Activated naive CD4-positive, alpha-beta T cell treated with anti-CD3 and anti-CD28 coated beads for 36 hours (primary cell): ENCODE measurements at regions of chr1 and their contacts with region 1.

Region 1: GRCh38 chr1:92536980-92537884 is 50.5 kb upstream of the GFI1 start:
- DNase-seq: peak; percentile 30
- H3K4me3 Mint-ChIP-seq: peak overlapping the region; percentile 57
- H3K27ac Mint-ChIP-seq: peak overlapping the region; percentile 88
- H3K4me1 Mint-ChIP-seq: peaks cover 83% of the 10 kb centered on the region
- H3K27me3 Mint-ChIP-seq: no peaks in the 10 kb centered on the region

Region 2: GRCh38 chr1:91754348-91754747 is 782.9 kb before region 1 on chr1:
- CTCF ChIA-PET with region 1: no interaction called
- intact Hi-C with region 1: loop called (anchors 1 kb)
- DNase-seq: peak; percentile 81
- H3K4me3 Mint-ChIP-seq: no peak overlapping the region
- H3K27ac Mint-ChIP-seq: peak overlapping the region; percentile 70
- H3K4me1 Mint-ChIP-seq: peaks cover 37% of the 10 kb centered on the region
- H3K27me3 Mint-ChIP-seq: peaks cover 4% of the 10 kb centered on the region

Region 3: GRCh38 chr1:92037400-92037799 is 499.8 kb before region 1 on chr1:
- CTCF ChIA-PET with region 1: no interaction called
- intact Hi-C with region 1: no loop called
- DNase-seq: no peak
- H3K4me3 Mint-ChIP-seq: no peak overlapping the region
- H3K27ac Mint-ChIP-seq: no peak overlapping the region
- H3K4me1 Mint-ChIP-seq: no peaks in the 10 kb centered on the region
- H3K27me3 Mint-ChIP-seq: no peaks in the 10 kb centered on the region

Region 4: DNA sequence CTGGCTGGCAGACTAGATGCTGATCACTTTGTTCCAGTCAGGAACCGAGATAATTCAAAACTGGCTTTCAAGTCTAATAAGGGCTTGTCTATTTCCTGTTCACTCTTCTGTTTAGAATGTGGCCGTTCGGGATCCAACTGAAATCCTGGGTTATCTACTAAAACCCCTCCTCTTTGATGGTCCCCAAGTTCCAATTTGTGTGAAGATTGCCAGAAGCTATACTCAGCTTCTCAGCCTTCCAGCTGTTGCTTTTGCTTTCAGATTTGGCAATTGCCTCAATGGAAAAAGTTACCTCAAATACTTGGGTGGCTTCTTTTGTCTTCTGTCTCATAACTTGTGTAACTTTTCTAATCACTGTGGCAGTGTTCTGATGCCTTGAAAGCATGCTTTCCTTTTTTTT is 413.4 kb before region 1 on chr1:
- CTCF ChIA-PET with region 1: no interaction called
- intact Hi-C with region 1: loop called (anchors 1 kb)
- DNase-seq: peak; percentile 29
- H3K4me3 Mint-ChIP-seq: peak overlapping the region; percentile 42
- H3K27ac Mint-ChIP-seq: peak overlapping the region; percentile 62
- H3K4me1 Mint-ChIP-seq: peaks cover 13% of the 10 kb centered on the region
- H3K27me3 Mint-ChIP-seq: no peaks in the 10 kb centered on the region

Region 5: GRCh38 chr1:92367496-92367895 is 169.7 kb before region 1 on chr1:
- CTCF ChIA-PET with region 1: no interaction called
- intact Hi-C with region 1: no loop called
- DNase-seq: no peak
- H3K4me3 Mint-ChIP-seq: no peak overlapping the region
- H3K27ac Mint-ChIP-seq: no peak overlapping the region
- H3K4me1 Mint-ChIP-seq: peaks cover 39% of the 10 kb centered on the region
- H3K27me3 Mint-ChIP-seq: no peaks in the 10 kb centered on the region

Region 6: DNA sequence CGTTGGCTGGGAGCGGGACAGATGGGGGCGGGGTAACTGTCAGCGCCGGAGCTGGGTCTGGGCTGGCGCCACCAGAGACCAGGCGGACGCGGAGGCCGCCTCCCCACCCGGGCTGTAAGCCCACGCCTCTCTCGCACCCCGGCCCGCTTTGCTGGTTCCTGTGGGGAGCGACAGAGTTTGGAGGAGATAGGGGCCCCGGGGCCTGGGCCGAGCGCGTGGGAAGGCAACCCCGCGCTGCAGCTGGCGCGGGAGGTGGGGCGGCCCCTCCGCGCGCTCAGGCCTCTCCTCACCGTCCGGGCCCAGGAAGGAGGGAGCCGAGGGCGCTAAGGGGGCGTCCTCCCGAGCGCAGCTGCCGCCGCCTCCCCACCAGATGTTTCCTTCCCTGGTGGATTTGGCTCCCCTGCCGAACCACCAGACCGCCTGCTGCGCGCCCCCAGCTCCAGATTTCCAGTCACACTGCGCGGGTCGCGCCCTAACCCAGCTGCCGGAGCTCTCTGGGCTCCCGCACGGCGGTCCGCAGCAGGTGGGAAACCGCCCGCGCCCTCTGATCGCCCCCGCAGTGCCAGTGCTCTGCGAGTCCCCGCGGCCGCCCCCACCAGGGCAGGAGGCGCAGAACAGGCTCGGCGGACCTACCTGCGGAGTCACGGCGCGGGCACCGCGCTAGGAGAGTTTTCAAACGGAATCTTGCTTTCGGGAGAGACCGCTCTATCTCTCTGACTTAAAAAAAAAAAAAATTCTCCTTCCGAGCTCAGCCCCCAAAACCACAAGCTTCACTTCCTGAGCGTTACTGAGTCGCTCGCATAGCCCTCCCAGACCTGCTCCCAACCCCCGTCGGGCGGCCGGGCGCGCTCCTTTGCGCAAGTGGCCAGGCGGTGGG is 51.6 kb before region 1 on chr1:
- CTCF ChIA-PET with region 1: interaction called, 20 read pairs
- intact Hi-C with region 1: loop called (anchors 1 kb)
- DNase-seq: peak; percentile 91
- H3K4me3 Mint-ChIP-seq: peak overlapping the region; percentile 90
- H3K27ac Mint-ChIP-seq: peak overlapping the region; percentile 93
- H3K4me1 Mint-ChIP-seq: peaks cover 38% of the 10 kb centered on the region
- H3K27me3 Mint-ChIP-seq: no peaks in the 10 kb centered on the region

Region 7: GRCh38 chr1:92577261-92577895 is 40.1 kb after region 1 on chr1:
- CTCF ChIA-PET with region 1: interaction called, 9 read pairs
- intact Hi-C with region 1: loop called (anchors 1 kb)
- DNase-seq: no peak
- H3K4me3 Mint-ChIP-seq: peak overlapping the region; percentile 92
- H3K27ac Mint-ChIP-seq: peak overlapping the region; percentile 97
- H3K4me1 Mint-ChIP-seq: peaks cover 62% of the 10 kb centered on the region
- H3K27me3 Mint-ChIP-seq: no peaks in the 10 kb centered on the region

Region 8: DNA sequence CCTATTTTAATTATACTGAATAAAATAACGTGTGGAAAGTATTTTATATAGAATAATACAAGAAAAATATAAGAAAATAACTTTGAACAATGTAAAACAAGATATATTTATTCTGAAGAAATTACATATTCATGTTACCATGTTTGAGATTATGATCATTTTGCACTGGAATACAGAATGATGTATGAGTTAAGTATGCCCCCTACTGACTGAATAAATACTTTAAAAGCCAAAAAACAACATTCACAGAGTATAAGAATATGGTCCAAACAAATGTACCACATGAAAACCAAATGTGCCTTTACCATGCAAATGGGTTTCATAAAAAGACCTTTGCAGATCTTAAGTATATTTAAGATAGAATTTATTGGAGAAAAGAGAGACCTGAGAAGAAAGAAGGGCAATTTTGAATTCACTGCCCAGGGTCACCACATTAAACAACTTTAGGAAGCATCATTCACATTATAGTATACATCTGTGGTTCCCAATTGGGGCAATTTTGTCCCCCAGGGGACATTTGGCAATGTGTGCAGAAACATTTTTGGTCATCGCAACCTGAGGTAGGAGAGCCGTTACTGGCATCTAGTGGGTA is 86.1 kb after region 1 on chr1:
- CTCF ChIA-PET with region 1: no interaction called
- intact Hi-C with region 1: loop called (anchors 1 kb)
- DNase-seq: no peak
- H3K4me3 Mint-ChIP-seq: no peak overlapping the region
- H3K27ac Mint-ChIP-seq: no peak overlapping the region
- H3K4me1 Mint-ChIP-seq: peaks cover 16% of the 10 kb centered on the region
- H3K27me3 Mint-ChIP-seq: no peaks in the 10 kb centered on the region

Region 9: DNA sequence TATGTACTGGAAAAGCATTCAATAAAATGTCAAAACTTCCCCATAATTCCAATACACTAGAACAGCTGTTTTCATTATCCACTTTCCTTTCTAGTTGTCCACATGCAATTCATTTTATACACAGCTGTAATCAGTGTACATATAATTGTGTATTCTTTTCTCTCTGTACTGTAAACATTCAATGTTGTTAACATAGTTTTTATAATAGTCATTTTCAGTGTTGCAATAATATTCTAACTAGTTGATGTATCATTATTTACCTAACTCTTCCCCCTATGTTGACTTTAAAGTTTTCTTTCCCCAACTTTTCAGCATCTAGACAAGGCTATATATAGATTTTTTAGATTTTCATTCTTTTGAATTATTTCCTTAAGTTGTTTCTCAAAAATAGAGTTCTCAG is 379.7 kb after region 1 on chr1:
- CTCF ChIA-PET with region 1: no interaction called
- intact Hi-C with region 1: no loop called
- DNase-seq: no peak
- H3K4me3 Mint-ChIP-seq: no peak overlapping the region
- H3K27ac Mint-ChIP-seq: no peak overlapping the region
- H3K4me1 Mint-ChIP-seq: peaks cover 12% of the 10 kb centered on the region
- H3K27me3 Mint-ChIP-seq: no peaks in the 10 kb centered on the region

Region 10: GRCh38 chr1:92960395-92961130 is 423.3 kb after region 1 on chr1:
- CTCF ChIA-PET with region 1: no interaction called
- intact Hi-C with region 1: loop called (anchors 5 kb)
- DNase-seq: peak; percentile 76
- H3K4me3 Mint-ChIP-seq: peak overlapping the region; percentile 89
- H3K27ac Mint-ChIP-seq: peak overlapping the region; percentile 94
- H3K4me1 Mint-ChIP-seq: peaks cover 41% of the 10 kb centered on the region
- H3K27me3 Mint-ChIP-seq: no peaks in the 10 kb centered on the region

Region 11: DNA sequence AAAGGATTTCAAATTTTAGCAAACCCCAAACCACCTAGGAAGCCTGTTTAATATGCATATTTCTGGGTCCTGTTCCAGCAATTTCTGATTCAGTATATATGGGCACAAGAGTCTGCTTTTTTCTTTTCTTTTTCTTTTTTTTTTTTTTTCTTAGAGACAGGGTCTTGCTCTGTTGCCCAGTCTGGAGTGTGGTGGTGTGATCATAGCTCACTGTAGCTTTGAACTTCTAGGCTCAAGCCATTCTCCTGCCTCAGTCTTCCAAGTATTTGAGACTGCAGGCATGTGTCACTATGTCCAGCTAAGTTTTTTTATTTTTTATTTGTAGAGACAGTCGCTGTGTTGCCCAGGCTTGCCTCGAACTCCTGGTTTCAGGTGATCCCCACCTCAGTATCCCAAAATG is 678.1 kb after region 1 on chr1:
- CTCF ChIA-PET with region 1: no interaction called
- intact Hi-C with region 1: no loop called
- DNase-seq: no peak
- H3K4me3 Mint-ChIP-seq: no peak overlapping the region
- H3K27ac Mint-ChIP-seq: no peak overlapping the region
- H3K4me1 Mint-ChIP-seq: peaks cover 21% of the 10 kb centered on the region
- H3K27me3 Mint-ChIP-seq: no peaks in the 10 kb centered on the region